Activated CD4-positive, alpha-beta T cell treated with anti-CD3 and anti-CD28 coated beads, Interleukin-2, amount 10 ng/mL, durations not matched to agents 24 days and 14 days (primary cell): ENCODE measurements at regions of chr18 and their contacts with region 1.

Region 1: DNA sequence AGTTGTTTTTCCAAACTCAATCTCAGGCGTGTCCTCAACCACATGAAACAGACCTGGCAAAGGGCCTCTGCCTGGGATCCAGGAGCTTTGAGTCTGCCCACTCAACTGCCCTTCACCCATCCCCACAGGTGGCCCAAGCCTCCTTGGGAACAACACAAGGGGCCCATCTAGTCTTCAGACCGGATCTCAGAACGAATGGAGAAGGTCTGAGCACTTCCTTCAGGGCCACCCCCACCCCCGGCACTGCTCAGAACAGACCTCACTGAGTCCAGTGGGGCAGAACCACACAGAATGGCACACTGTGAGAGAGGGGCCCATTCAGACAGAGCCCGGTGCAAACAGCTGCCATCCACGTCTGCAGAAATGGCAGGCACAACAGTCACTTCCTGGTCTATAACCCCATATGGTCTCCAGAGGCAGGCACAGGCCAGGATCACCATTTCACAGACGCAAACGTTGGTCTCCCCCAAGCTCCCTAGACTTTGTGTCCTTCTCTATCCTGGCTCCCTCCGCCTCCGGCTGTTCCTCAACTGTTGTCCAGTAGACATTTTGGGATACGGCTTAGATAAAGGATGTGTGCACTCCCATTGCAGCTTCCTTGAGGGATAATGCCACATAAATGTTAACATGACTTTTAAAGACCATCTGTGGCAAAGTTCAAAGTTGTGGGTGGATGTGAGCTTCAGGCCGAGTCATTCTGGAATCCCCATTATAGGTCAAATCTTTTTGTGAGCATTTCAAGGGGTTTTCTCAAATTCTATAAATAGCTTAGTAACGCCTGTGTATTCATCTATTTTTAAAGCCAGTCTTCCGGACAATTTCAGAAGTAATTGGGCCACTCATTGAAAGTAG is 149.7 kb downstream of the SMAD7 start:
- DNase-seq: no peak
- H3K4me3 Mint-ChIP-seq: peak overlapping the region; percentile 66
- H3K27ac Mint-ChIP-seq: peak overlapping the region; percentile 97
- H3K4me1 Mint-ChIP-seq: peaks cover 67% of the 10 kb centered on the region
- H3K27me3 Mint-ChIP-seq: no peaks in the 10 kb centered on the region

Region 2: GRCh38 chr18:48813833-48814489 is 12.9 kb after region 1 on chr18:
- intact Hi-C with region 1: loop called (anchors 1 kb)
- DNase-seq: peak; percentile 86
- H3K4me3 Mint-ChIP-seq: peak overlapping the region; percentile 27
- H3K27ac Mint-ChIP-seq: peak overlapping the region; percentile 85
- H3K4me1 Mint-ChIP-seq: peaks cover 51% of the 10 kb centered on the region
- H3K27me3 Mint-ChIP-seq: peaks cover 2% of the 10 kb centered on the region